ENCODE measurements at regions of chr3 and their contacts with region 1.

Region 1: GRCh38 chr3:42880601-42881451 is 5.1 kb upstream of the CYP8B1 start:
- DNase-seq: peak; percentile 91
- H3K4me3 Mint-ChIP-seq: peak overlapping the region; percentile 75
- H3K27ac Mint-ChIP-seq: no peak overlapping the region
- H3K4me1 Mint-ChIP-seq: peaks cover 10% of the 10 kb centered on the region
- H3K27me3 Mint-ChIP-seq: no peaks in the 10 kb centered on the region

Region 2: DNA sequence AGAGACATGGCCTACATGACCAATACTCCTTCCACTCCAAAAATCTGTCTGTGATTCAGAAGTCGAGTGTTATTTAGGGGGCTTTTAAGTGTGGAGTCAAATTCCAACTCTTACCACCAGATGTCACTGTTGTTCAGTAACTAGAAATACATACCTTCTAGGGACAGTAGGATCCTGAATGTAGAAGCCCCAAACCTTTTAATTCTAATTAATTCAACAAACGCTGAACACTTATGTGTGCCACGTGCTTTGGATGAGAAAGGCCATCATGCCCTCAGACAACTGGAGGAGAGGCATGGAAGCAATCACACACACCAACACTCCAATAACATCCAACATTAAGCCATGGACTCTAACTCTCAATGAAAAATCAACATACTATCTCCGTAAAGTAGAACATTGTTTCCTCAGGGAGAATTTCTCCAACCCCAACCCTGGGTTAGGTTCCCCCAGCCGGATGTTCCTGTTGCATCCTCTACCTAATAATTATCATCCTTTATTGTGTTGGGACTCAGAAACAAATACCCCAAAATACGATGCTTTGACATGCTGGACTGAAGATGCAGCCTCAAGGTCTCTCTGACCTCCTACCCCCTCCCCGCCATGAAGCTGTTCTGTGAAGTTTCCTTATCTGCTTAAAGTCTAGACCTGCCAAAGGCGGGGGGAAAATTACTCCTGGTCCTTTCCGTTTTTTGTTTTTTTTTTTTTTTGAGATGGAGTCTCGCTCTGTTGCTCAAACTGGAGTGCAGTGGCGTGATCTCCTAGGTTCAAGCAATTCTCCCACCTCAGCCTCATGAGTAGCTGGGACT is 99.7 kb before region 1 on chr3:
- CTCF ChIA-PET with region 1: interaction called, 19 read pairs
- intact Hi-C with region 1: loop called (anchors 1 kb)
- DNase-seq: peak; percentile 22
- H3K4me3 Mint-ChIP-seq: no peak overlapping the region
- H3K27ac Mint-ChIP-seq: no peak overlapping the region
- H3K4me1 Mint-ChIP-seq: no peaks in the 10 kb centered on the region
- H3K27me3 Mint-ChIP-seq: no peaks in the 10 kb centered on the region

Region 3: DNA sequence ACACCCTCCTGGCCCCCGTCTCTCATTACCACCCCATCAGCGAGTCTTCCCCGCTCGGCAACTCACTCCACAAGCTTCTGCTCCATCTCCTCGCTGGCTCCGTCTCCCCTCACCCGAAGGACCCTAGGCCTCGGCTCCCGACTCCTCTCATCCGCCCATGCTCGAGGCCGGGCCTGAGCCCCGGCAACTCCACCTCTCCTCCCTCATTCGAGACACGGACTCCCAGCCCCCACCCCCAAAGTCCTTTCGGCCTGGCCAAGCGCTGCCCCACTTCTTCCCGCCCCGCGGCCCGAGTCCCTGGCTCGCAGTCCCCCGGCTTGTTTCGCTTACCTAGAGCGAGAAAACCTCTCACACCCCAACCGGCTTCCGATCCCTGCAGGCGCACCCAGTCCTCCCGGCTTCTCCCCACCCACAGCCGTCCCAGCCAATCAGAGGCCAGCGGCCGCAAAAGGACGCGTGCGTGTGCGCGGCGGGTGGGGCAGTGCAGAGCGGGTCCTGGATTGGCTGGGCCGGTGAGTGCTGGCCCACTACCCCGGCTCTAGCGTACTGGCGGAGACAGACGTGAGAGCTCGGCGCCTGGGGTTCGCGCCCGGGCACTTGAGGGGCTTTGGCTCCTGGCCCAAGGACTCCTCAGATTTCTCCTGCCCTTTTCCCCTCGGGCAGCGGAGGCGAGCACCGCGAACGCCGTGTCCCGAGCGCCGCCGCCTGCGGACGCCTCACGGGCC is 76.6 kb before region 1 on chr3 and contains the start of gene HIGD1A:
- CTCF ChIA-PET with region 1: no interaction called
- intact Hi-C with region 1: loop called (anchors 1 kb)
- DNase-seq: peak; percentile 95
- H3K4me3 Mint-ChIP-seq: peak within 1 kb of the TSS; percentile 96
- H3K27ac Mint-ChIP-seq: peak within 1 kb of the TSS; percentile 86
- H3K4me1 Mint-ChIP-seq: peaks cover 42% of the 10 kb centered on the region
- H3K27me3 Mint-ChIP-seq: peaks cover 11% of the 10 kb centered on the region
- total RNA-seq, gene HIGD1A: 57.1 to 66.4 TPM

Region 4: DNA sequence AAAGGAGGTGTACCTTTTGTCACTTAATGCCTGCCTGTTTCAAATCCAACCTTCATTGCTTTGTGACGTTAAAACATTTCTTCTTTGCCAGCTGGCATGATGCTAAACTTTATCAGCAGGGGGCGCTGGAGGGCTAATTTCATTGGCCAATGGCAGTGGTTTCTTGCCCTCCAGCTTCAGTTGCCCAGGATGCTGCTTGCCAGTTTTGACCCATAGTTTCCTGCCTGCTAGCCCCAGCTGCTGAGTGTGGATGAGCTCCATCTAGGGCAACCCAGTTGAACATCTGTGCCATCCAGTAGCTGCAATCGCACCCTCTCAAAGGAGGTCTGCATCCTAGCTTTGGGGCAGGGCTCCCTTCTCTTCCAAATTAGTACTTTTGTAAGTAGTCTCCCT is 49.5 kb before region 1 on chr3:
- CTCF ChIA-PET with region 1: interaction called, 16 read pairs
- intact Hi-C with region 1: loop called (anchors 1 kb)
- DNase-seq: peak; percentile 92
- H3K4me3 Mint-ChIP-seq: no peak overlapping the region
- H3K27ac Mint-ChIP-seq: no peak overlapping the region
- H3K4me1 Mint-ChIP-seq: no peaks in the 10 kb centered on the region
- H3K27me3 Mint-ChIP-seq: no peaks in the 10 kb centered on the region

Region 5: DNA sequence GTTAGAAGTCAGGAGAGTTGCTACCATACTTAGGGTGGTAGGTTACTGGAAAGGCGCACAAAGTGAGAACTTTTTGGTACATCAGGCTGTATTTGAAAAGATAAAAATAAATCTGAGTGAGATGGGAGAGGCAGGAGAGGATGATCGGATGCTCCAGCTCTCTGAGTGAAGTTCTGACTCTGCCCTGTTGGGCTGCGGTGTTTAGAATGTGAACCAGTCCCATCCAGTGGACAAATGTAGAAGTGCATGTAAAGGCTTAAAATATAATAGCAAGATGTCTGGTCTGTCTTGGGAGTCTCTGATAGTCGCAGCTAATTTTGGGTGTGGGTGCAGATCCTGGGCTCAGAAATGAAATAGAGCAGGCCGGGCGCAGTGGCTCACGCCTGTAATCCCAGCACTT is 41.2 kb before region 1 on chr3:
- CTCF ChIA-PET with region 1: interaction called, 5 read pairs
- intact Hi-C with region 1: loop called (anchors 2 kb)
- DNase-seq: peak; percentile 49
- H3K4me3 Mint-ChIP-seq: no peak overlapping the region
- H3K27ac Mint-ChIP-seq: no peak overlapping the region
- H3K4me1 Mint-ChIP-seq: no peaks in the 10 kb centered on the region
- H3K27me3 Mint-ChIP-seq: no peaks in the 10 kb centered on the region

Region 6: GRCh38 chr3:42905740-42906069 is 24.9 kb after region 1 on chr3:
- CTCF ChIA-PET with region 1: no interaction called
- intact Hi-C with region 1: loop called (anchors 1 kb)
- DNase-seq: no peak
- H3K4me3 Mint-ChIP-seq: peak overlapping the region; percentile 67
- H3K27ac Mint-ChIP-seq: no peak overlapping the region
- H3K4me1 Mint-ChIP-seq: peaks cover 12% of the 10 kb centered on the region
- H3K27me3 Mint-ChIP-seq: peaks cover 13% of the 10 kb centered on the region

Region 7: GRCh38 chr3:43389388-43390254 is 508.8 kb after region 1 on chr3:
- CTCF ChIA-PET with region 1: no interaction called
- intact Hi-C with region 1: no loop called
- DNase-seq: peak; percentile 87
- H3K4me3 Mint-ChIP-seq: peak overlapping the region; percentile 9
- H3K27ac Mint-ChIP-seq: peak overlapping the region; percentile 55
- H3K4me1 Mint-ChIP-seq: peaks cover 63% of the 10 kb centered on the region
- H3K27me3 Mint-ChIP-seq: no peaks in the 10 kb centered on the region